ENCODE measurements at regions of chr7 and their contacts with region 1.

Region 1: DNA sequence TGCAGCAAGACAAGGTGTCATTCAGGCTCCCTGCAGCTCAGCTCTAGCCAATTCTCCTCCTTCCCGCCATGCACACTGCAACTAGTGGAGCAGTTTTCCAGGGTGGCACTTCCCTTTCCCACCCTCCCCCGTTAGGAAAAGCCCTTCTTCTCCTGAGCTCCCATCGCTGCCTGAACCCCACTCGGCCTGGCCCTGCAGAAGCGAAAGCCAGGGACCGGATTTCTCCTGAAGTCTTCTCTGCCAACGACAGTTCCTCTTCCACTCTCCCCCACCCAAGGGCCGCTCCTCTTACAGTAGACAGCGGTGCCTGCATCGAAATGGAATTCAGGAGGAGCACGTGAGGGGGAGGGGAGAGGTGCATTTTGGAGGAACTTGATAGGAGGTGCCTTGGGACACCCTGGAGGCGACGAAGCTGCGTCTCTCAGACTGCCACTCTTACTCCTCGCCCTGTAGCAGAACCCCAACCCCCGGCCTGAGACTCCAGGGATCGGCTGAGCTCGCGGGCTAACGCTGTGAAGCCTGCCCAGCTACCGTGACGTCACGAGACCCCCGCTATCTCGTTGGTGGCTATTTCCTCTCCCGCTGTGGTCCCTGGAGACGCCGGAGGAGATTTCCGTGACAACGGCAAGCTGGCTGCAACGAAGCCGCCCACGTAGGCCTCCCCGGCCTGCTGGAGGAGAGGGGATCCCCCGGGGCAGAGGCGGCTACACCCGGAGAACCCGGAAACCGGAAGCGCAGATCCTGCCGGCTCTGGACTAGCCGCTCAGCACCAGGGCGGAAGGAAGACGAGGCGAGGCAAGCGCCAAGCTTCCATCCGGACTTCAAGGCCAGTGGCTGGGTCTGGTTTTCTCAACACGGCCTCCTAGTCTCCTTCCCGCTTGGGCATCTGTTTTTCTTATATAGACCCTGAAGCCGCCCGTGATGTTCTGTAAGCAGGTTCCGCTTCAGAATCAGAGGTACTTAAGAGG is 109.7 kb downstream of the RALA start:
- DNase-seq: peak; percentile 91 to 93
- H3K4me3 ChIP-seq: peak overlapping the region; percentile 76
- H3K4me3 Mint-ChIP-seq: peak overlapping the region; percentile 88
- H3K27ac Mint-ChIP-seq: peak overlapping the region; percentile 92
- H3K4me1 ChIP-seq: peaks cover 11% of the 10 kb centered on the region
- H3K4me1 Mint-ChIP-seq: peaks cover 21% of the 10 kb centered on the region
- H3K27me3 ChIP-seq: no peaks in the 10 kb centered on the region; the same call in 1 of the 2 replicates
- H3K27me3 Mint-ChIP-seq: no peaks in the 10 kb centered on the region
- CTCF ChIP-seq: no peak

Region 2: GRCh38 chr7:39580149-39580874 is 152.8 kb before region 1 on chr7:
- CTCF ChIA-PET with region 1: interaction called, 8 read pairs
- POLR2A ChIA-PET with region 1: interaction called, 3 read pairs
- intact Hi-C with region 1: loop called (anchors 1 kb)
- DNase-seq: peak; percentile 77 to 78
- H3K4me3 ChIP-seq: no peak overlapping the region
- H3K4me3 Mint-ChIP-seq: no peak overlapping the region
- H3K27ac Mint-ChIP-seq: no peak overlapping the region
- H3K4me1 ChIP-seq: no peaks in the 10 kb centered on the region; the same call in 1 of the 2 replicates
- H3K4me1 Mint-ChIP-seq: no peaks in the 10 kb centered on the region
- H3K27me3 ChIP-seq: no peaks in the 10 kb centered on the region
- H3K27me3 Mint-ChIP-seq: no peaks in the 10 kb centered on the region
- CTCF ChIP-seq: peak; percentile 74 to 80

Region 3: GRCh38 chr7:39623018-39623731 is 109.9 kb before region 1 on chr7 and contains the start of gene RALA:
- CTCF ChIA-PET with region 1: no interaction called
- POLR2A ChIA-PET with region 1: interaction called, 8 read pairs
- intact Hi-C with region 1: loop called (anchors 5 kb)
- DNase-seq: peak; percentile 95
- H3K4me3 ChIP-seq: peak within 1 kb of the TSS; percentile 90
- H3K4me3 Mint-ChIP-seq: peak within 1 kb of the TSS; percentile 84
- H3K27ac Mint-ChIP-seq: peak within 1 kb of the TSS; percentile 88
- H3K4me1 ChIP-seq: peaks cover 25% of the 10 kb centered on the region
- H3K4me1 Mint-ChIP-seq: peaks cover 53% of the 10 kb centered on the region
- H3K27me3 ChIP-seq: no peaks in the 10 kb centered on the region
- H3K27me3 Mint-ChIP-seq: no peaks in the 10 kb centered on the region
- CTCF ChIP-seq: no peak
- total RNA-seq, gene RALA: 41.7 and 43.5 TPM in 2 replicates

Region 4: DNA sequence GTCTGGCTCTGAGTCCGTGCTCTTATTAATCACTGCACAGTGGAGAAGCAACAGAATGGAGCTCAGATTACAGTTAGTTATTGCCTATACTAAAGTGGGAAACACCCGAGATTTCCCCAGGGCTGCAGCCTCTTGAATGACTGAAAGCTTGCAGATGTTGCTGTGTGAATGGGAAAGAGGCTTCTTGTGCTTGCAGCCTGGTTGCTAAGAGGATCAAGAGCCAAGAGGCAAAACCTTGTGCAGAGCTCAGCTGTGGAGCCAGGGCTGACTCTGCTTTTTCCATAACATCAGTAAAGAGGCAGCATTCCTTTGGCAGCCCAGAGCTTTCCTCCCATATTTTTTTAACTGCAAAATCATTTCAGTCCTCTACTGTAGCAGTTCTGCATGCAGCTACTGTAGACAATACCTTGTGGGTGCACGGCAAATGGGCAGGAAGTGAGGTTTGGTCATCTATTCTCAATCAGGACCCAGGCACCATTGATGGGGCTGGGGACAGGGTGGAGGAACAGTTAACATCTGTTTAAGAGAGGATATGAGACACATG is 23.3 kb before region 1 on chr7:
- CTCF ChIA-PET with region 1: no interaction called
- POLR2A ChIA-PET with region 1: no interaction called
- intact Hi-C with region 1: loop called (anchors 2 kb)
- DNase-seq: no peak
- H3K4me3 ChIP-seq: no peak overlapping the region
- H3K4me3 Mint-ChIP-seq: no peak overlapping the region
- H3K27ac Mint-ChIP-seq: no peak overlapping the region
- H3K4me1 ChIP-seq: no peaks in the 10 kb centered on the region
- H3K4me1 Mint-ChIP-seq: no peaks in the 10 kb centered on the region
- H3K27me3 ChIP-seq: no peaks in the 10 kb centered on the region
- H3K27me3 Mint-ChIP-seq: no peaks in the 10 kb centered on the region
- CTCF ChIP-seq: no peak

Region 5: DNA sequence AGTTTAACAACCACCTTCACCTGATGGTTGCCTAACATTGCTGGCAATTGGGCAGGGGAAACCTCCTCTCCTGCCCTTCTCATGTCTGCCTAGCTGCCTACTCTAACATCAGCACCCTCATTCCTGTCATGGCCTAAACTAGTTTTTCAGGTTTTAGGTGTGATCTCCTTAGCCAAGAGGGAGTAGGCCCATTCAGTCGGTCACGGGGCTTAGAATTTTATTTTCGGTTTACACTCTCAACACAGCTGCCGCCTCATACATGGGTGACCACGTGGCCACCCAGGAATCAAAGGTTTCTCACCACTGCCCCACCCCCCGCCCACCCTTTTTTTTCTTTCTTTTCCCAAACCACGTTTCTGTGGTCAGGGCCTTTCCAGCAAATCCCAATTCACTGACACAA is 12.5 kb before region 1 on chr7:
- CTCF ChIA-PET with region 1: interaction called, 4 read pairs
- POLR2A ChIA-PET with region 1: no interaction called
- intact Hi-C with region 1: loop called (anchors 1 kb)
- DNase-seq: peak; percentile 73 to 86
- H3K4me3 ChIP-seq: no peak overlapping the region
- H3K4me3 Mint-ChIP-seq: peak overlapping the region; percentile 43
- H3K27ac Mint-ChIP-seq: peak overlapping the region; percentile 78
- H3K4me1 ChIP-seq: peaks cover 17% of the 10 kb centered on the region
- H3K4me1 Mint-ChIP-seq: peaks cover 20% of the 10 kb centered on the region
- H3K27me3 ChIP-seq: no peaks in the 10 kb centered on the region
- H3K27me3 Mint-ChIP-seq: no peaks in the 10 kb centered on the region
- CTCF ChIP-seq: no peak

Region 6: GRCh38 chr7:39746103-39746819 is 13.1 kb after region 1 on chr7:
- CTCF ChIA-PET with region 1: no interaction called
- POLR2A ChIA-PET with region 1: interaction called, 10 read pairs
- intact Hi-C with region 1: no loop called
- DNase-seq: peak; percentile 76 to 80
- H3K4me3 ChIP-seq: no peak overlapping the region
- H3K4me3 Mint-ChIP-seq: no peak overlapping the region
- H3K27ac Mint-ChIP-seq: no peak overlapping the region
- H3K4me1 ChIP-seq: peaks cover 14% of the 10 kb centered on the region
- H3K4me1 Mint-ChIP-seq: peaks cover 13% of the 10 kb centered on the region
- H3K27me3 ChIP-seq: no peaks in the 10 kb centered on the region
- H3K27me3 Mint-ChIP-seq: no peaks in the 10 kb centered on the region
- CTCF ChIP-seq: peak; percentile 79 to 83

Region 7: DNA sequence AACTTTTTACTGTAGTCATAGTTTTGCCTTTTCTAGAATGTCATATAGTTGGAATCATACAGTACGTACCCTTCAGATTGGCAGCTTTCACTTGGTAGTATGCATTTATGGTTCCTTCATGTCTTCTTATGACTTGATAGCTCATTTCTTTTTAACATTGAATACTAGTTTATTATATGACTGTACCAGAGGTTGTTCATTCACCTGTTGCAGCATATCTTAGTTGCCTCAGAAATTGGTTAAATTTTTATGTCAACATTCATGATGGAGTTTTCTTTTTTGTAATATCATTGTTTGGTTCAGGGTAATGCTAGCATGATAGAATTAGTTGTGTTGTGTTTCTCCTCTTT is 122.2 kb after region 1 on chr7:
- CTCF ChIA-PET with region 1: no interaction called
- POLR2A ChIA-PET with region 1: no interaction called
- intact Hi-C with region 1: no loop called
- DNase-seq: no peak
- H3K4me3 ChIP-seq: no peak overlapping the region
- H3K4me3 Mint-ChIP-seq: peak overlapping the region; percentile 68
- H3K27ac Mint-ChIP-seq: no peak overlapping the region
- H3K4me1 ChIP-seq: no peaks in the 10 kb centered on the region
- H3K4me1 Mint-ChIP-seq: no peaks in the 10 kb centered on the region
- H3K27me3 ChIP-seq: no peaks in the 10 kb centered on the region
- H3K27me3 Mint-ChIP-seq: peaks cover 20% of the 10 kb centered on the region
- CTCF ChIP-seq: no peak

Measured in Caco-2 (cell line).